ENCODE measurements at regions of chr1 and their contacts with region 1.

Region 1: GRCh38 chr1:78114034-78114956 is 68.5 kb downstream of the GIPC2 start:
- DNase-seq: peak; percentile 73
- ATAC-seq: peak; percentile 86
- H3K4me3 ChIP-seq: no peak overlapping the region
- H3K27ac ChIP-seq: no peak overlapping the region
- H3K4me1 ChIP-seq: peaks cover 0 to 16% of the 10 kb centered on the region in 2 experiments; a peak in 2 of 4 replicates
- H3K27me3 ChIP-seq: no peaks in the 10 kb centered on the region
- CTCF ChIP-seq: peak; percentile 74 to 100 (median 92)
- POLR2A ChIP-seq: no peak
- RAD21 ChIP-seq: peak; percentile 99

Region 2: DNA sequence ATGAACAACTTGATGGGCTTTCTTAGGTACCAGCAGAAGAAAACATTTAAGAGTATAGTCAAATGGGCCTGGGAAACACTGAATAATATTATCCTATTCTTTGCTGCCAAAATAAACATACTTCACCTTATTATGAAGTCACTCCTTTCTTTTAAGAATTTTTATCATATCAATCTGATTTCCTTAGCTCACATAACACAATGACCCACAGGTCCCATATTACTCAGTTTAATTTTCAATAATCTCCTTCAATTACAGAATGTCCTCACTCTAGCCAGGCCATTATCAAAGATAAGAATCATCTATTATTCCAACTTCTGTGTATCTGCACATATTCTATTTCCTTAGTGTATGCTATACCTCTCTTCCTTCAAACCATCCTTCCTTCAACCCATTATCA is 958.1 kb before region 1 on chr1:
- CTCF ChIA-PET with region 1: interaction called, 3 read pairs
- POLR2A ChIA-PET with region 1: no interaction called
- RAD21 ChIA-PET with region 1: no interaction called
- intact Hi-C with region 1: loop called (anchors 1 kb)
- DNase-seq: no peak
- ATAC-seq: no peak
- H3K4me3 ChIP-seq: no peak overlapping the region
- H3K27ac ChIP-seq: no peak overlapping the region
- H3K4me1 ChIP-seq: no peaks in the 10 kb centered on the region
- H3K27me3 ChIP-seq: no peaks in the 10 kb centered on the region
- CTCF ChIP-seq: no peak
- POLR2A ChIP-seq: no peak
- RAD21 ChIP-seq: no peak

Region 3: DNA sequence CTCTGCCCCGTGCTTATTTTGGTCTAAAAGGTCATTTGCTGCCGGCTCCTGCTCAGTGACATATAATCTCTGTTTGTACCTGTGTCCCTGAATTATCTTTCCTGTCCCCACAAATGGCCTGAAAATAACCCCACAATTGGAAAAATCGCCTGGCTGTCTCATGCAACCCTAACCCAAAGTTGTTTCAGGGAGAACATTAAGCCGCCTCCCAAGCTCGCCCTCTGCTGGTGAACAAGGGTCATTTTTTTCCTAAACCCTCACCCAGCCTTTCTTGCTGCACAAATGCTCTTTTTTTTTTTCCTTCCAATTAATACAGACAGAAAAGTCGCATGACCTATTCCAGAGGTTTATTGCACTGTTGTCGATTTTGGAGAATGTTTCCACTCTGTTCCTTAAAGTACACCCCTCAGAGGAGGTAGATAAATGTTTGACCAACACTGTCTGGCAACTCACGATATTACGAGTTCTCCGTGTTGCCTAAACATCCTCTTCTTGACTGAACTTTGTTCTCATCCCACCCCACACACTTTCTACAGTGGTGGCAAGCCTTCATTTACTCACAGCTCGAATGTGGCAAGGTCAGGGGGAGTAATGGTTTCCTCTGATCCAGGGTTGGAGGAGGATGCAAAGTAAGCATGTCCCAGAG is 580.5 kb before region 1 on chr1:
- CTCF ChIA-PET with region 1: interaction called, 3 read pairs
- POLR2A ChIA-PET with region 1: no interaction called
- RAD21 ChIA-PET with region 1: no interaction called
- intact Hi-C with region 1: loop called (anchors 10 kb)
- DNase-seq: peak; percentile 43
- ATAC-seq: peak; percentile 33; the same call in 1 of the 2 replicates
- H3K4me3 ChIP-seq: no peak overlapping the region
- H3K27ac ChIP-seq: no peak overlapping the region
- H3K4me1 ChIP-seq: peaks cover 17 to 50% of the 10 kb centered on the region in 2 experiments
- H3K27me3 ChIP-seq: no peaks in the 10 kb centered on the region
- CTCF ChIP-seq: peak; percentile 62 to 83 (median 70); a peak in 5 of 6 replicates
- POLR2A ChIP-seq: no peak
- RAD21 ChIP-seq: peak; percentile 73

Region 4: GRCh38 chr1:77683160-77684148 is 430.8 kb before region 1 on chr1:
- CTCF ChIA-PET with region 1: no interaction called
- POLR2A ChIA-PET with region 1: no interaction called
- RAD21 ChIA-PET with region 1: no interaction called
- intact Hi-C with region 1: loop called (anchors 10 kb)
- DNase-seq: peak; percentile 77
- ATAC-seq: peak; percentile 73
- H3K4me3 ChIP-seq: peak overlapping the region; percentile 82 to 97
- H3K27ac ChIP-seq: peak overlapping the region; percentile 96
- H3K4me1 ChIP-seq: peaks cover 6 to 35% of the 10 kb centered on the region in 2 experiments; a peak in 3 of 4 replicates
- H3K27me3 ChIP-seq: no peaks in the 10 kb centered on the region
- CTCF ChIP-seq: peak; percentile 36 to 78 (median 69); a peak in 5 of 6 replicates
- POLR2A ChIP-seq: peak; percentile 58
- RAD21 ChIP-seq: peak; percentile 61

Region 5: GRCh38 chr1:77725706-77726105 is 388.6 kb before region 1 on chr1:
- CTCF ChIA-PET with region 1: interaction called, 3 read pairs
- POLR2A ChIA-PET with region 1: no interaction called
- RAD21 ChIA-PET with region 1: no interaction called
- intact Hi-C with region 1: loop called (anchors 10 kb)
- DNase-seq: no peak
- ATAC-seq: no peak
- H3K4me3 ChIP-seq: no peak overlapping the region
- H3K27ac ChIP-seq: no peak overlapping the region
- H3K4me1 ChIP-seq: no peaks in the 10 kb centered on the region
- H3K27me3 ChIP-seq: no peaks in the 10 kb centered on the region
- CTCF ChIP-seq: no peak
- POLR2A ChIP-seq: no peak
- RAD21 ChIP-seq: no peak

Region 6: DNA sequence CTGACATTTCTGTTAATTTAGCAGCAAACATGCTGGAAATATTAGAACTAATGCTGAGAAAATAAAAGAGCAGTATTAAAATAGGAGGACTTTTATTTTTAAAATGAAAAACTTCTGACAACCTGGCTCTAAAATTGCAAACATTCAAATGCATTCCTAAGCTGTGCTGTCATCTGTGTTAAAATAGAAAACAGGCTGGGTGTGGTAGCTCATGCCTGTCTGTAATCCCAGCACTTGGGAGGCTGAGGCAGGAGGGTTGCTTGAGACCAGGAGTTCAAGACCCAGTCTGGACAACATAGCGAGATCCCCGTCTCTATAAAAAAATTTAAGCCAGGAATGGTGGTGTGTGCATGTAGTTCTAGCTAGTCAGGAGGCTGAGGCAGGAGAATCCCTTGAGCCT is 290.2 kb before region 1 on chr1:
- CTCF ChIA-PET with region 1: interaction called, 5 read pairs
- POLR2A ChIA-PET with region 1: no interaction called
- RAD21 ChIA-PET with region 1: interaction called in 1 of 2 experiments, 3 read pairs
- intact Hi-C with region 1: loop called (anchors 1 kb)
- DNase-seq: peak; percentile 12
- ATAC-seq: peak; percentile 64
- H3K4me3 ChIP-seq: peak overlapping the region in 1 of 2 experiments; percentile 18; a peak in 2 of 4 replicates
- H3K27ac ChIP-seq: no peak overlapping the region
- H3K4me1 ChIP-seq: peaks cover 13 to 22% of the 10 kb centered on the region in 2 experiments
- H3K27me3 ChIP-seq: no peaks in the 10 kb centered on the region
- CTCF ChIP-seq: no peak
- POLR2A ChIP-seq: no peak
- RAD21 ChIP-seq: no peak

Region 7: DNA sequence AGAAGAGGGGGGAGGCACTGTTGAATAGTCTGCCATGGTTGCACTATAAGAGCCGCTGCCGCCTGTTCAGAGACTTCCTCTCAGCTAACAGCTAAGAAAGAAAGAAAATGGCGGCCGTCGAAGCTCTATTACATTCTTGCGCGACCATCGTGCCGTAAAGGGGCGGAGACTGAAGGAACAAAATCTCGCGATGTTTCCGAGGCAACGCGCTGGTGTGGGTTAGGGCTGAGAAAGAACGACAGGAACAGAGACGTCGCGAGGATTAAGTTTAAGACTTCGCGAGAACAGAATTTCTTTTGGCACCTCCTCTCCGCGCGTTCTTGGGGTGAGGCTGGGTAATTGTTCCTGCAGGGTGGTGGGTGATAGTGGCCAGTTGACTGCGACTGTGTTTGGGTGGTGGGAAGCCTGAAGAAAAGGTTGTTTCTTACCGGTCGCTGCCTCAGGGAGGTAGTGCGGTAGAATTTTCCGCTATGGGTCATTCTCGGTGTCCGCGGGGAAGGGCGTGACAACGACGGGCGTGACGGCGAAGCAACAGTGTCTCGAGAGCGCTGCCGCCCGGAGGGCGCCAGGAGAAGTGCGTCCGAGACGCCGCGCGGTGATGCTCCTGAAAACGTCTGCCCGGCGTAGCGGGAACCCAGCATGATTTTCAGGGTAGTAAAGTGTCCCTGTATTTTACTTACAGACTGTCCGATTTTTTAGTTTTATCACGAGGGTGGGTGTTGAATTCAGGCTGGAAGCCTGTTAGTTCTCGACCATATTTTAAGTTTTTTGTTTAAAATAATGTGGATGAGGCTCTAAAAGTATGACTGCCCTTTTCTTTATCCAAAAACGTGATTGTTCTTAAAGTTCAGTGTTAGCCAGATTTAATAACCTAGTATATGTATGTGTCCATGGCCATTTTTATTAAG is 135.1 kb before region 1 on chr1 and contains the start of gene FUBP1:
- CTCF ChIA-PET with region 1: interaction called, 7 read pairs
- POLR2A ChIA-PET with region 1: interaction called, 3 read pairs
- RAD21 ChIA-PET with region 1: no interaction called
- intact Hi-C with region 1: loop called (anchors 1 kb)
- DNase-seq: peak; percentile 99
- ATAC-seq: peak; percentile 89
- H3K4me3 ChIP-seq: peak within 1 kb of the TSS; percentile 99
- H3K27ac ChIP-seq: peak within 1 kb of the TSS; percentile 80
- H3K4me1 ChIP-seq: peaks cover 12 to 20% of the 10 kb centered on the region in 2 experiments
- H3K27me3 ChIP-seq: no peaks in the 10 kb centered on the region
- CTCF ChIP-seq: peak; percentile 48 to 56 (median 50); a peak in 5 of 6 replicates
- POLR2A ChIP-seq: peak; percentile 91
- RAD21 ChIP-seq: peak; percentile 47; the same call in 1 of the 2 replicates
- total RNA-seq, gene FUBP1: 125 TPM

Region 8: GRCh38 chr1:78145105-78145580 is 30.8 kb after region 1 on chr1:
- CTCF ChIA-PET with region 1: no interaction called
- POLR2A ChIA-PET with region 1: no interaction called
- RAD21 ChIA-PET with region 1: no interaction called
- intact Hi-C with region 1: no loop called
- DNase-seq: peak; percentile 56
- ATAC-seq: peak; percentile 89
- H3K4me3 ChIP-seq: no peak overlapping the region
- H3K27ac ChIP-seq: no peak overlapping the region
- H3K4me1 ChIP-seq: no peaks in the 10 kb centered on the region
- H3K27me3 ChIP-seq: no peaks in the 10 kb centered on the region
- CTCF ChIP-seq: peak; percentile 83 to 88 (median 85)
- POLR2A ChIP-seq: no peak
- RAD21 ChIP-seq: peak; percentile 89

Measured in HCT116 (cell line).